ENCODE measurements at regions of chr14 and their contacts with region 1.

Region 1: GRCh38 chr14:23727566-23728335 is 91.6 kb downstream of the DHRS2 start:
- DNase-seq: peak; percentile 56
- H3K4me3 Mint-ChIP-seq: no peak overlapping the region
- H3K27ac Mint-ChIP-seq: no peak overlapping the region
- H3K4me1 Mint-ChIP-seq: no peaks in the 10 kb centered on the region
- H3K27me3 Mint-ChIP-seq: no peaks in the 10 kb centered on the region

Region 2: GRCh38 chr14:23910101-23910875 is 182.5 kb after region 1 on chr14:
- intact Hi-C with region 1: loop called (anchors 5 kb)
- DNase-seq: peak; percentile 67
- H3K4me3 Mint-ChIP-seq: no peak overlapping the region
- H3K27ac Mint-ChIP-seq: no peak overlapping the region
- H3K4me1 Mint-ChIP-seq: peaks cover 3% of the 10 kb centered on the region
- H3K27me3 Mint-ChIP-seq: peaks cover 10% of the 10 kb centered on the region

Region 3: DNA sequence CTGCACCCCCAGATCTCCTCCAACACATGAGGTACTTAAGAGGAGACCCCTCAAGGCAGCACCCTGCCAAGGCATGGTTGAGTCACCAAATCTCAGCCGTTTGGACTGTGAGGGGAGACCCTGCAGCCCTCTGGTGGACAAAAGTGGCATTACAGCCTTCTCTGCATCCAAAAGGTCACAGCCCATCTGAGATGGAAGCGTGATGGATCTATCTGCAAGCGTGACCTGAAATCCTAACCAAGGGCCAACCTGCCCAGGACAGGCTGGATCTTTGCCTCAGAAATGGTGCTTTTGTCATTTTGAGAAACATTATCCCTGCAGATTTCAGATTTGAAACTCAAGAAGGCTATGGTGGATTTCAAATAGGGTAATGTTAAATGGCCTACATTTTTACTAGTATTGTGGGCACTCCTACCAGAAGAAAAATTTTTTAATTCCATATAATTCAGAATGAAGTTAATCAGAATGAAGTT is 202.1 kb after region 1 on chr14:
- intact Hi-C with region 1: loop called (anchors 1 kb)
- DNase-seq: peak; percentile 94
- H3K4me3 Mint-ChIP-seq: no peak overlapping the region
- H3K27ac Mint-ChIP-seq: no peak overlapping the region
- H3K4me1 Mint-ChIP-seq: no peaks in the 10 kb centered on the region
- H3K27me3 Mint-ChIP-seq: peaks cover 3% of the 10 kb centered on the region